ENCODE measurements at regions of chr20 and their contacts with region 1.

Region 1: GRCh38 chr20:48620519-48621254 is 207.1 kb downstream of the PREX1 start:
- DNase-seq: peak; percentile 90
- ATAC-seq: peak; percentile 94
- H3K4me3 Mint-ChIP-seq: peak overlapping the region; percentile 32
- H3K27ac Mint-ChIP-seq: peak overlapping the region; percentile 10
- H3K4me1 Mint-ChIP-seq: peaks cover 7% of the 10 kb centered on the region
- H3K27me3 Mint-ChIP-seq: no peaks in the 10 kb centered on the region

Region 2: GRCh38 chr20:47196091-47197081 is 1424.3 kb before region 1 on chr20:
- CTCF ChIA-PET with region 1: interaction called, 3 read pairs
- POLR2A ChIA-PET with region 1: no interaction called
- intact Hi-C with region 1: loop called in 1 of 2 experiments (anchors 10 kb)
- DNase-seq: peak; percentile 91
- ATAC-seq: peak; percentile 57
- H3K4me3 Mint-ChIP-seq: no peak overlapping the region
- H3K27ac Mint-ChIP-seq: no peak overlapping the region
- H3K4me1 Mint-ChIP-seq: peaks cover 16% of the 10 kb centered on the region
- H3K27me3 Mint-ChIP-seq: peaks cover 8% of the 10 kb centered on the region

Region 3: DNA sequence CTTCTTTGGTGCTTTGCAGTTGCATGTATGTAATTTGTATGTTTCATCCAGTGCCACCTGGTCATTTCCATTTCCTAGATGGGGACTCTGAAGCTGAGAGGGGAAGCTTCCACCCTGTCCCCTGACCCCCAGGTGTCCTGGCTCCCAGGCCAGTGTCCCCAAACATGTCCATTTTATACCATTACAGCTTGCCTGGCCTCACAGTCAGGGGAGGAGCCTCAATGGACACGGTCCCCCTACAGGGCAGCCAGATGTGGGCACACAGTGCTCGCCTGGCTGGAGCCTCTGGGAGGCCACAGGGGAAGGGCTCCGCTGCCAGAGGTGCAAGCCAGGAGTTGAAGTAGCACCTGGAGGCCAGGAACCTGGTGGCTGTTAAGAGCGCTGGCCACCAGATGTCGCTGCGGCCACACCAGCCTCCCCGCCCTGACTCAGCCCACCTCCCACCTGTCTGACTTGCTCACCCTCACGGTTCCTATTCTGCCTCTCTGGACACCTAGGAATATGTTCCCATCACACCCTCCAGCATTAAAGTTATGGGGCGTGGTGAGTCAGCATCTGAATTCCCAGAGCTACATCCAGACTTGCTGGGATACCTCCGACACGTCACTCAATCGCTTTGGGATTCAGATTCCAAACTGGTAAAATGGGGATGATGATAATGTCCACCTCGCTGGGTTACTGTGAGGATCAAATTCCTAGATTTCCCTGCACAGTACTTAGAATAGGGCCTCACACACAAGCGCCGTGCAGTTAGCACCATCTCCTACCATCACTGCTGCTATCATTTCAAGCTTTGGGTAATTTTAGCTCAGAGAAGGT is 942.8 kb before region 1 on chr20:
- CTCF ChIA-PET with region 1: interaction called, 43 read pairs
- POLR2A ChIA-PET with region 1: no interaction called
- intact Hi-C with region 1: loop called (anchors 1 kb)
- DNase-seq: peak; percentile 83
- ATAC-seq: peak; percentile 91
- H3K4me3 Mint-ChIP-seq: no peak overlapping the region
- H3K27ac Mint-ChIP-seq: no peak overlapping the region
- H3K4me1 Mint-ChIP-seq: no peaks in the 10 kb centered on the region
- H3K27me3 Mint-ChIP-seq: no peaks in the 10 kb centered on the region

Region 4: GRCh38 chr20:47785854-47786764 is 834.6 kb before region 1 on chr20:
- CTCF ChIA-PET with region 1: no interaction called
- POLR2A ChIA-PET with region 1: no interaction called
- intact Hi-C with region 1: loop called in 1 of 2 experiments (anchors 1 kb)
- DNase-seq: peak; percentile 36
- ATAC-seq: peak; percentile 42
- H3K4me3 Mint-ChIP-seq: peak overlapping the region; percentile 51
- H3K27ac Mint-ChIP-seq: no peak overlapping the region
- H3K4me1 Mint-ChIP-seq: peaks cover 10% of the 10 kb centered on the region
- H3K27me3 Mint-ChIP-seq: peaks cover 56% of the 10 kb centered on the region

Region 5: DNA sequence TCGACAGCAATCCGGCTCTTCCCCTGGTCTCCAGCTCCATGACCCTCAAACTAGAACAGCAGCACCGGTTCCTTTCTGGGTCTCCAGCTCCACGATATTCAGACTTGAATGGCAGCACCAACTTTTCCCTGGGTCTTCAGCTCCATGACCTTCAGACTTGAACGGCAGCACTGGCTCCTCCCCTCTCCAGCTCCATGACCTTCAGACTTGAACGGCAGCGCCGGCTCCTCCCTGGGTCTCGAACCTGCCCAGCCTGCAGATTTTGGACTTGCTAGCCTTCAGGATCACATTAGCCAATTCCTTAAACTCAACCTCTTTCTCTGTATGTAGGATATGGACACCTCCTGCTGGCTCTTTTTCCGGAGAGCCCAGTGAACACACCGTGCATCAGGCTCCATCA is 143.8 kb before region 1 on chr20:
- CTCF ChIA-PET with region 1: interaction called, 10 read pairs
- POLR2A ChIA-PET with region 1: no interaction called
- intact Hi-C with region 1: no loop called
- DNase-seq: no peak
- ATAC-seq: no peak
- H3K4me3 Mint-ChIP-seq: no peak overlapping the region
- H3K27ac Mint-ChIP-seq: no peak overlapping the region
- H3K4me1 Mint-ChIP-seq: no peaks in the 10 kb centered on the region
- H3K27me3 Mint-ChIP-seq: peaks cover 18% of the 10 kb centered on the region

Region 6: DNA sequence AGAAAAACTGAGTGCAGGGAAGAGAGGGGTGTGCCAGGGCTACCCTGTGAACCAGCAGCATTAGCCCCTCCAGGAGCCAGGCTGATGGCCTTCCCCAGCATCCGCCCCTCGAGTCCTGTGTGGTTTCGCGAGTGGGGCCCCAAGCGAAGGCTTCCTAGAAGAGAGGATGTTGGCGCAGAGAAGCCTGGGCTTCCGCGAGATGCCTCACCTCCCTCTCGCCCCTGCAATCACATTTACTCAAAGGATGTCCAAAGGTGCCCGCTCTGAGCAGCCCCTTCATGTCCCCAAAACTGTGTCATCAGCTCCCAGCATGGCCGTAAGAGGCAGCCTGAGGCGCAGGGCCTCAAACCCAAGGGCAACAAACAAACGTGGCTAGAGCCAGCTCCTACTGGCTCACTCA is 95.4 kb after region 1 on chr20:
- CTCF ChIA-PET with region 1: no interaction called
- POLR2A ChIA-PET with region 1: no interaction called
- intact Hi-C with region 1: no loop called
- DNase-seq: peak; percentile 66
- ATAC-seq: peak; percentile 79
- H3K4me3 Mint-ChIP-seq: peak overlapping the region; percentile 35
- H3K27ac Mint-ChIP-seq: peak overlapping the region; percentile 91
- H3K4me1 Mint-ChIP-seq: peaks cover 65% of the 10 kb centered on the region
- H3K27me3 Mint-ChIP-seq: no peaks in the 10 kb centered on the region

Region 7: DNA sequence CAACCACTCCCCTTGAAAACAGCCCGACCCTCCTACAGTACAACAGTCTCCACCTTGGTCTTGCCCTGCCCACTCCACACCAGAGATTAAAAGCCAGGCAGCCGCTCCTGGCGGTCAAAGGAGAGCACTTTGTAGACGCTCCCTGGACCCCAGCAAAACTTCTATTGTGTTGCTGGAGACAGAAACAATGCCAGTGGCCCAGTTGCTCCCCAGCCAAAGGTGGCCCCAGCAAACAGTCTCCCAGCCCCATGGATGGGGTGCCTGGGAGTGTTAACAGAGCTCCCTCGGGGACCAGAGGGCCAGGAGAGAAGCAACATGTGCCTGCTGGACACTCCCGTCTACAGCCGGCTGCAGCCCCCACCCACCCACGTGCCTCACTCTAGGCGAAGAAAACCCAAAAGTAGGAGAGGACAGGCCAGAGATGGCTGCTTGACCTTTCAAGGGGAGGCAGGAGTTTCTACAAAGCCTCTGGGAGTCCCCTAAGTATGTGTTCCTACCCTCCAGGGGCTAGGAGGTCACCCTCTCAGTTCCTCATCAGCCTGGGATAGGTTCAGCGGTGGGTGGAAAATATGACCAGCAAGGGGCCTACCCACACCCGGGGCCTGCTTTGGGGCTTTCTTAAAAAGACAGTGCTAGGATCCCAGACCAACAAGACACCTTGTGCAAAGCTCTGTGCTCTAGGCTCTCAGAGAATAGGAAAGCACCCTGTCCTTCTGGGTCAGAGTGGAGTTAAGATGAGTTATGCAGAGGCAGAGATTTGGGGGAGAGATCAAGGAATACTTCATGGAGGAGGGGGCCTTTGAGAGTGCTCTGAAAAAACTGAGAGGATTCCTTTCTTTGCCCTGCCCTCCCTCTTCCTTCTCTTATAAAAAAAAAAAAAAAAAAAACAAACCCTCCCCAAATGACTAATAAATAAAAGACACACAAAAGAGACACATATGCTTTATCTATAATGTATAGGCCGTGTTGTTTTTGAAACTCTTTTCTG is 226.1 kb after region 1 on chr20:
- CTCF ChIA-PET with region 1: no interaction called
- POLR2A ChIA-PET with region 1: no interaction called
- intact Hi-C with region 1: no loop called
- DNase-seq: peak; percentile 85
- ATAC-seq: peak; percentile 93
- H3K4me3 Mint-ChIP-seq: no peak overlapping the region
- H3K27ac Mint-ChIP-seq: peak overlapping the region; percentile 89
- H3K4me1 Mint-ChIP-seq: peaks cover 23% of the 10 kb centered on the region
- H3K27me3 Mint-ChIP-seq: no peaks in the 10 kb centered on the region